SK-N-SH (cell line): ENCODE measurements at regions of chr13 and their contacts with region 1.

Region 1: GRCh38 chr13:31044377-31045285 is 112.2 kb downstream of the TEX26 start:
- DNase-seq: peak; percentile 83
- H3K4me3 ChIP-seq: peak overlapping the region in 1 of 2 experiments; percentile 30; a peak in 2 of 4 replicates
- H3K27ac ChIP-seq: peak overlapping the region; percentile 95 to 97
- H3K4me1 ChIP-seq: peaks cover 28 to 35% of the 10 kb centered on the region in 2 experiments
- H3K27me3 ChIP-seq: no peaks in the 10 kb centered on the region
- CTCF ChIP-seq: peak; percentile 94
- EP300 ChIP-seq: no peak
- RAD21 ChIP-seq: peak; percentile 97

Region 2: DNA sequence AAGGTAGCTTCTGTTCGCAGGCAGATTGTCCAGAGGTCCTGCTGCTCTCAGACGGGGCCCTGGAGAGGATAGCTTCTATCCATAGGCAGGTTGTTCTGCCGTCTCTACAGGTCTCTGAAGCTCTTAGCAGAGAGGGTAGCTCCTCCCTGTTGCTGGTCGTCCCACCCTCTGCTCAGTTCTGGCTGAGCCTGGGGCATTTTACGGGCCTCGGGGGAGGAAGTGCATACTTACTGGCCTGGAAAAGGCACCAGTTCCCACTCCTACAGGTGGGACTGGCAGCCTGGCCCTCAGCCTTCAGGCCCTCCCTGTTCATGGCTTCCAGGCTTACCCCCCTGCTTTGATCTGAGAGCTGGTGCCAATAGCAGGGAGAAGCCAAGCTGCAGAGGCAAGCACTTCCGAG is 384.7 kb before region 1 on chr13:
- CTCF ChIA-PET with region 1: no interaction called
- POLR2A ChIA-PET with region 1: no interaction called
- DNase-seq: no peak
- H3K4me3 ChIP-seq: no peak overlapping the region
- H3K27ac ChIP-seq: no peak overlapping the region
- H3K4me1 ChIP-seq: no peaks in the 10 kb centered on the region; a peak in 1 of 4 replicates
- H3K27me3 ChIP-seq: no peaks in the 10 kb centered on the region
- CTCF ChIP-seq: no peak
- EP300 ChIP-seq: no peak
- RAD21 ChIP-seq: no peak

Region 3: GRCh38 chr13:30865123-30866049 is 179.2 kb before region 1 on chr13:
- CTCF ChIA-PET with region 1: interaction called, 36 read pairs
- POLR2A ChIA-PET with region 1: interaction called, 6 read pairs
- DNase-seq: peak; percentile 80
- H3K4me3 ChIP-seq: peak overlapping the region in 1 of 2 experiments; percentile 19; a peak in 2 of 4 replicates
- H3K27ac ChIP-seq: peak overlapping the region; percentile 97 to 99
- H3K4me1 ChIP-seq: peaks cover 43 to 47% of the 10 kb centered on the region in 2 experiments
- H3K27me3 ChIP-seq: no peaks in the 10 kb centered on the region
- CTCF ChIP-seq: peak; percentile 97
- EP300 ChIP-seq: peak; percentile 7 to 21; a peak in 1 of 4 replicates
- RAD21 ChIP-seq: peak; percentile 95

Region 4: DNA sequence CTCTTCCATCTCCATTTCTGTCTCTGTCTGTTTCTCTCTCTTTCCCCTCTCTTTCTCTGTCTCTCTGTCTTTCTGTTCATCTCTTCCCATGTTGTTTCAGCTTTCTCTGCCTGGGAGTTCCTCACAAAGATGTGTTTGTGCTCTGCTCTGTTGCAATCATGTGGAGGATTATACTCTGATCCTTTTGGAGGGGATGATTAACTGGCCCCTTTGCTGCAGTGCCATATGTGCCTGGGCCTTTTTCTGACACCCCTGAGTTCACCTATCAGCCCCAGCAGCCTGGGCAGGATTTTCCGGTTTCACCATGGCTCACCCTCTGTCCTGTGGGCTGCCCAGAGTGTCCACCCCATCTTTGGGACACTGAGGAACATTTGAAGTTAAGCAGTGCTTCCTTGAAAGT is 121.2 kb before region 1 on chr13:
- CTCF ChIA-PET with region 1: no interaction called
- POLR2A ChIA-PET with region 1: no interaction called
- DNase-seq: no peak
- H3K4me3 ChIP-seq: no peak overlapping the region
- H3K27ac ChIP-seq: no peak overlapping the region
- H3K4me1 ChIP-seq: peaks cover 0 to 7% of the 10 kb centered on the region in 2 experiments; a peak in 2 of 4 replicates
- H3K27me3 ChIP-seq: no peaks in the 10 kb centered on the region
- CTCF ChIP-seq: no peak
- EP300 ChIP-seq: no peak
- RAD21 ChIP-seq: no peak

Region 5: DNA sequence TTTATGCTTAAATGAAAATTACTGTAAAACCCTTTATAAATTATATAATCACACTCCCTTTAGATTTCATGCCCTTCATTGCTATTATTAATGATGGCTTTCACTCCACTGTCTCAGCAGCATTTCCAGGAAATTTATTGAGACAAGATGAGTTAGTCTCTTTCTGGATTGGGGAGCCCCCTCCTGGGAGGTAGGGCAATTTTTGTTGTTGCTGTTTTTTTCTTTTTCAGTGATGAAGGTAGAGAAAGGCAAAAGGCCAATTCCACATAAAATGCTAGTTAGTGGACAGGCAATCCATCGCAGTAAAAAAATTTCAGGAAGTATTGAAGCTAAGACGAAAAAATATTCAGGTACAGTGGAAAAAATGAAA is 32.0 kb before region 1 on chr13:
- CTCF ChIA-PET with region 1: interaction called, 17 read pairs
- POLR2A ChIA-PET with region 1: no interaction called
- DNase-seq: peak; percentile 70
- H3K4me3 ChIP-seq: no peak overlapping the region
- H3K27ac ChIP-seq: peak overlapping the region in 1 of 2 experiments; percentile 58; a peak in 2 of 4 replicates
- H3K4me1 ChIP-seq: peaks cover 0 to 25% of the 10 kb centered on the region in 2 experiments; a peak in 2 of 4 replicates
- H3K27me3 ChIP-seq: no peaks in the 10 kb centered on the region
- CTCF ChIP-seq: peak; percentile 66
- EP300 ChIP-seq: no peak
- RAD21 ChIP-seq: peak; percentile 89

Region 6: DNA sequence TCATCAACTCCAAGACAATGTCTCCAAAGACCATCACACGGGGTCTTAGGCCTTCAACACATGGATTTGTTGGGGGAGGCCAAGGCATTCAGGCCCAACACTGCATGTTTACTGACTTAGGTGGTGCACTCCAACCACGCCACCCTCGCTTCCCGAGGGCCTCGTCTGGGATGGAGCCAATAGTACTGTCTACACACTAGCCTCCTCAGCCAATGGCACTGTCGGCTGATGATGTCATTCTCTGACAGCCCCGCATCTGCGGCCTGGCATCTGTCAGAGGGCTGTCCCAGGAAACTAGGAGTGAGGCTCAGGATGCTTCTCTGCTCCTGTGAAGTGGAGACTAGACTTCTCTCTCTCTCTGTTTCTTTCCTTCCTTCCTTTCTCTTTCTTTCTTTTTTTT is 15.5 kb before region 1 on chr13:
- CTCF ChIA-PET with region 1: interaction called, 17 read pairs
- POLR2A ChIA-PET with region 1: no interaction called
- DNase-seq: peak; percentile 66
- H3K4me3 ChIP-seq: no peak overlapping the region
- H3K27ac ChIP-seq: no peak overlapping the region
- H3K4me1 ChIP-seq: peaks cover 0 to 8% of the 10 kb centered on the region in 2 experiments; a peak in 1 of 4 replicates
- H3K27me3 ChIP-seq: no peaks in the 10 kb centered on the region
- CTCF ChIP-seq: no peak
- EP300 ChIP-seq: no peak
- RAD21 ChIP-seq: no peak

Region 7: GRCh38 chr13:31161828-31162590 is 117.4 kb after region 1 on chr13 and contains the start of gene HSPH1:
- CTCF ChIA-PET with region 1: interaction called, 10 read pairs
- POLR2A ChIA-PET with region 1: interaction called, 3 read pairs
- DNase-seq: peak; percentile 94
- H3K4me3 ChIP-seq: peak within 1 kb of the TSS; percentile 86 to 98
- H3K27ac ChIP-seq: peak within 1 kb of the TSS; percentile 92 to 96
- H3K4me1 ChIP-seq: peaks cover 0 to 15% of the 10 kb centered on the region in 2 experiments; a peak in 2 of 4 replicates
- H3K27me3 ChIP-seq: no peaks in the 10 kb centered on the region
- CTCF ChIP-seq: peak; percentile 35; the same call in 1 of the 2 replicates
- EP300 ChIP-seq: peak; percentile 6 to 88; a peak in 3 of 4 replicates
- RAD21 ChIP-seq: no peak
- polyA plus RNA-seq, gene HSPH1: 30.4 and 32.8 TPM in 2 replicates

Region 8: DNA sequence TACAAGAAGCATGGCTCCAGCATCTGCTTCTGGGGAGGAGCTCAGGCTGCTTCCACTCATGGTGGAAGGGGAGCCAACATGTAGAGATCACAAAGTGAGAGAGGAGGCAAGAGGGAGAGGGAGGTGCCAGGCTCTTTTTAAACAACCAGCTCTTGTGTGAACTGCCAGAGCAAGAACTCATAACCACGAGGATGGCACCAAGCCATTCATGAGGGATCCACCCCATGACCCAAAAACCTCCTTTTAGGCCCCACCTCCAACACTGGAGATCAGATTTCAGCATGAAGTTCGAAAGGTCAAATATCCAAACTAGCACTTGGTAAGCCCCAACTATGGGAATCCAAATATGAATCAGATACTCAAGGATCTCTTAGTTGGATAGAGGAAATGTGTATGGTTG is 825.9 kb after region 1 on chr13:
- CTCF ChIA-PET with region 1: no interaction called
- POLR2A ChIA-PET with region 1: no interaction called
- DNase-seq: no peak
- H3K4me3 ChIP-seq: no peak overlapping the region
- H3K27ac ChIP-seq: no peak overlapping the region
- H3K4me1 ChIP-seq: no peaks in the 10 kb centered on the region; a peak in 2 of 4 replicates
- H3K27me3 ChIP-seq: no peaks in the 10 kb centered on the region
- CTCF ChIP-seq: no peak
- EP300 ChIP-seq: no peak
- RAD21 ChIP-seq: no peak